Endothelial cell of umbilical vein (primary cell): ENCODE measurements at regions of chr4 and their contacts with region 1.

Region 1: DNA sequence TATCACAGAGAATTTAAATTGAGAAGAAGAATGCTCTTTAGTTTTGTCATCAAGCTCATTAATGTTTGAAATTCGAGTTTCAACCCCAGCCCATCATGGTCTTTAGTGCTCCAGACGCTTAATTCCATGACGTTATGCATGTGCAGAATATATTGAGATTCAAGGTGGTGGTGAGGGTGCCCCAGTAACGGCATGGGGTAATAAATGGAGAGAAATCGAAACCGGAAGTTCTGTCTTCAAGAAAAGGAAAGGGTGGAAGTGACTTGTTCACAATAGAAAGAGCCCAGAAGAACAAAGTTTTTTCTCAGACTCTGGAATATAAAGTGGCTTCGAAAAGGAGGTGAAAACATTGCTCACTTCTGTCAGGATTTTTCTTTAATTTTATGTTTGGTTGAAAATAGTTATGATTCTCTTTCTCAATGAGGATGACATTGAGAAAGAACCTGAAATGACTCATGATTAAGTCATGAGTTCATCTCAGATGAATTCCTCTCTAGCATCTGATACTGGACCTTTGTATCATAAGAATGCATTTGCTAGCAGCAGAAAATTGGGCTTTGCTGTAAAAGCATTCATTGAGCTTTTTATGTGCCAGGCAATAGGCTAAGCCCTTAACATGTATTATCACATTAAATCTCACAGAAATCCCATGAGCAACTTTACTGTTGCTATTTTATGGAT is 779 bp upstream of the DDX60L start:
- DNase-seq: peak; percentile 88
- H3K4me3 ChIP-seq: peak overlapping the region; percentile 64 to 99 (median 90)
- H3K27ac ChIP-seq: peak overlapping the region; percentile 97
- H3K4me1 ChIP-seq: peaks cover 29% of the 10 kb centered on the region
- H3K27me3 ChIP-seq: no peaks in the 10 kb centered on the region
- CTCF ChIP-seq: no peak
- POLR2A ChIP-seq: no peak

Region 2: DNA sequence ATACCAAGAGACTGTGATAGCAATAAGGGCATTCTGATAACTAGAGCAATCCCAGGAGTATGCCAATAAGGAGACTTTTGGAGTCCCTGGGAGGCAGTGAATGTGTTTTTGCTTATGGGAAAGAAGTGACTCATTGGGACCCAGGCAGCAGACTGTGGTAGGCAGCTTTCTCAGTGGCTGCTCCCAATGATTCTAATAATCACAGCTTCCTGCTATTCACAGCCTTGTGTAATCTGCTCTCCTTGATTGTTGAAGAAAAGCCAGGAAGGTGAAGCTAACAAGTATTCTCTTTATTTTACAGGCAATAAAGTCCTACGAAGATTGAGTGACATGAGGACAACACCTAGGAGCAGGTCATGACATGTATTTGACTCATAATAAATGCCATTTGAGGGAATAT is 92.2 kb before region 1 on chr4:
- CTCF ChIA-PET with region 1: no interaction called
- POLR2A ChIA-PET with region 1: interaction called, 6 read pairs
- dilution Hi-C with region 1: no loop called
- intact Hi-C with region 1: loop called (anchors 2 kb)
- DNase-seq: peak; percentile 92
- H3K4me3 ChIP-seq: no peak overlapping the region
- H3K27ac ChIP-seq: peak overlapping the region; percentile 72
- H3K4me1 ChIP-seq: peaks cover 47% of the 10 kb centered on the region
- H3K27me3 ChIP-seq: no peaks in the 10 kb centered on the region
- CTCF ChIP-seq: no peak
- POLR2A ChIP-seq: no peak

Region 3: GRCh38 chr4:168408620-168409019 is 72.5 kb before region 1 on chr4:
- CTCF ChIA-PET with region 1: interaction called, 4 read pairs
- POLR2A ChIA-PET with region 1: no interaction called
- dilution Hi-C with region 1: no loop called
- intact Hi-C with region 1: loop called (anchors 1 kb)
- DNase-seq: peak; percentile 97
- H3K4me3 ChIP-seq: no peak overlapping the region
- H3K27ac ChIP-seq: peak overlapping the region; percentile 72
- H3K4me1 ChIP-seq: peaks cover 28% of the 10 kb centered on the region
- H3K27me3 ChIP-seq: no peaks in the 10 kb centered on the region
- CTCF ChIP-seq: no peak
- POLR2A ChIP-seq: peak; percentile 47

Region 4: DNA sequence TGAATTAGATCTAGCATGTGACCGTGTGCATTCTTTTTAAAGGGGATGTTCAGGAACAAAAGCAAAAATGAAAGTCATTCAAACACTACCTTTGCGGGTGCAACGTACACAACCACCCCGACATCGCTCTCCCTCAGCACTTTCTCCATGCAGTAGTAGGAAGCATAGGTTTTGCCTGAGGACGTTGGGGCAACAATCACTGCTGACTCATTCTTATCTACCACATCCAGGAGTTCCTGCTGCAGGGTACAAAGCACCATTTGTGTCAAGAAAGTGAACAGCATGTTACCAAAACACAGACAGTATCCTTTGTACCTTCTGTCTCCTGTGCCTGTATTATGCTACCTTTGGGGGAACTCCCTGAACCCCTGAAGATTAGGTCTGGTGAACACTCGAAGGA is 59.4 kb before region 1 on chr4:
- CTCF ChIA-PET with region 1: interaction called, 4 read pairs
- POLR2A ChIA-PET with region 1: no interaction called
- dilution Hi-C with region 1: no loop called
- intact Hi-C with region 1: loop called (anchors 1 kb)
- DNase-seq: peak; percentile 98
- H3K4me3 ChIP-seq: no peak overlapping the region
- H3K27ac ChIP-seq: peak overlapping the region; percentile 76
- H3K4me1 ChIP-seq: peaks cover 21% of the 10 kb centered on the region
- H3K27me3 ChIP-seq: no peaks in the 10 kb centered on the region
- CTCF ChIP-seq: no peak
- POLR2A ChIP-seq: peak; percentile 69

Region 5: DNA sequence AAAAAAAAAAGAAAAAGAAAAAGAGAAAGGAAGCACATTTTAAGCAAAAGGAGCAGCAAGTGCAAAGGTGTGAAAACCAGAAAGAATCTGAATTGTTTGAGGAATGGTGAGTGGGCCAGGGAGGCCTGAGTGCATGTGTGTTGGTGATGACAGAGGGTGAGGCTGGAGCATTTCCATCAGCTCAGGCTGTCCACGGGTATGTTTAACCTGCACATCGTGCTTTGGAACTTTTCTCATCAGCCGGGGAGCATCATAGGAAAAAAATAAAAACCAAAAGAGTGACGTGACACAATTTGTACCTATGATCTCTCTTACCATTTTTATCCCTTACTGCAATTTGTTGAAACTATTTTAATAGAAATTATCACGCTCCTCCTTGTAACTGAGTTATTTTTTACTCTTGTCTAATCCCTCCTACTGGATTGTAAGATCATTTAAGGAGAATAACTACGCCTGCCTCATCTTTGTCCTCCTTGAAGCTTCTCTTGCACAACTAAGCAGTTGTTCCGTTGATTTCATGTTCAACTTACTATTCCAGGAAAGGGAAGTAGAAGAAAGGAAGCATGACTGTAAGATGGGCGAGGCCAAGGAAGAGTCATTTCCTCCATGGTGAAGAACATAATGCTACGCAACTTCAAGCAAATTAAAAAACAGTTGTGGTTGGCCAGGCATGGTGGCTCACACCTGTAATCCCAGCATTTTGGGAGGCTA is 22.7 kb after region 1 on chr4:
- CTCF ChIA-PET with region 1: no interaction called
- POLR2A ChIA-PET with region 1: no interaction called
- dilution Hi-C with region 1: no loop called
- intact Hi-C with region 1: no loop called
- DNase-seq: peak; percentile 43
- H3K4me3 ChIP-seq: no peak overlapping the region
- H3K27ac ChIP-seq: no peak overlapping the region
- H3K4me1 ChIP-seq: peaks cover 5% of the 10 kb centered on the region
- H3K27me3 ChIP-seq: no peaks in the 10 kb centered on the region
- CTCF ChIP-seq: no peak
- POLR2A ChIP-seq: no peak

Region 6: GRCh38 chr4:168558599-168558998 is 77.5 kb after region 1 on chr4:
- CTCF ChIA-PET with region 1: no interaction called
- POLR2A ChIA-PET with region 1: no interaction called
- dilution Hi-C with region 1: no loop called
- intact Hi-C with region 1: loop called (anchors 2 kb)
- DNase-seq: peak; percentile 95
- H3K4me3 ChIP-seq: no peak overlapping the region
- H3K27ac ChIP-seq: peak overlapping the region; percentile 69
- H3K4me1 ChIP-seq: peaks cover 47% of the 10 kb centered on the region
- H3K27me3 ChIP-seq: no peaks in the 10 kb centered on the region
- CTCF ChIP-seq: no peak
- POLR2A ChIP-seq: no peak